ENCODE measurements at regions of chr16 and their contacts with region 1.

Region 1: DNA sequence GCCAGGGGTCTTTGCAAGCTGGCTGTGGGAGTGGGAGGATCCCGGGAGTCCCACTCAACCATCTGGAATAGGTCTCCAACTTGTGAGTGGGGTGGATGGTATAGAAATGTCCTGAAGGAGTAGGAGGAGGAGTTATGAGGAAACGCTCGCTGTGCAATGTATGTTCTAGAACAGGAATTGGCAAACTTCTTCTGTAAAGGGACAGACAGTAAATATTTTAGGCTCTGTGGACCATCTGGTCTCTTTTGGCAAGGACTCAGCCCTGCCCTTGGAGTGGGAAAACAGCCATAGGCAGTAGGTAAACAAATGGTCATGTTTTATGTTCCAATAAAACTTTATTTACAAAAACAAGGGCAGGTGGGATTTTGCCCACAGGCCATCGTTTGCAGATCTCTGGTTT is 149.2 kb downstream of the NPIPB5 start:
- DNase-seq: no peak
- H3K4me3 ChIP-seq: no peak overlapping the region
- H3K27ac ChIP-seq: no peak overlapping the region
- H3K4me1 ChIP-seq: no peaks in the 10 kb centered on the region
- H3K27me3 ChIP-seq: no peaks in the 10 kb centered on the region
- CTCF ChIP-seq: no peak
- POLR2A ChIP-seq: no peak

Region 2: GRCh38 chr16:22623351-22623781 is 36.6 kb before region 1 on chr16:
- CTCF ChIA-PET with region 1: no interaction called
- POLR2A ChIA-PET with region 1: no interaction called
- dilution Hi-C with region 1: no loop called
- intact Hi-C with region 1: loop called (anchors 5 kb)
- DNase-seq: no peak
- H3K4me3 ChIP-seq: no peak overlapping the region
- H3K27ac ChIP-seq: no peak overlapping the region
- H3K4me1 ChIP-seq: no peaks in the 10 kb centered on the region
- H3K27me3 ChIP-seq: peaks cover 7 to 23% of the 10 kb centered on the region in 2 experiments
- CTCF ChIP-seq: no peak
- POLR2A ChIP-seq: no peak

Region 3: GRCh38 chr16:22848451-22848850 is 188.5 kb after region 1 on chr16:
- CTCF ChIA-PET with region 1: no interaction called
- POLR2A ChIA-PET with region 1: no interaction called
- dilution Hi-C with region 1: no loop called
- intact Hi-C with region 1: no loop called
- DNase-seq: no peak
- H3K4me3 ChIP-seq: no peak overlapping the region
- H3K27ac ChIP-seq: no peak overlapping the region
- H3K4me1 ChIP-seq: no peaks in the 10 kb centered on the region
- H3K27me3 ChIP-seq: no peaks in the 10 kb centered on the region
- CTCF ChIP-seq: no peak
- POLR2A ChIP-seq: no peak

Measured in endothelial cell of umbilical vein (primary cell).